ENCODE measurements at regions of chr10 and their contacts with region 1.

Region 1: GRCh38 chr10:23994479-23995046 is 214.4 kb upstream of the KIAA1217 start:
- DNase-seq: no peak
- H3K4me3 ChIP-seq: no peak overlapping the region
- H3K27me3 ChIP-seq: no peaks in the 10 kb centered on the region; the same call in 1 of the 2 replicates
- CTCF ChIP-seq: peak; percentile 85

Region 2: GRCh38 chr10:23432166-23432565 is 562.4 kb before region 1 on chr10:
- CTCF ChIA-PET with region 1: no interaction called
- POLR2A ChIA-PET with region 1: no interaction called
- DNase-seq: no peak
- H3K4me3 ChIP-seq: no peak overlapping the region
- H3K27me3 ChIP-seq: 0 out of 2 replicates have a peak, but pooled peaks cover 2% of the 10 kb centered on the region
- CTCF ChIP-seq: no peak

Region 3: GRCh38 chr10:23981520-23982309 is 12.8 kb before region 1 on chr10:
- CTCF ChIA-PET with region 1: interaction called, 15 read pairs
- POLR2A ChIA-PET with region 1: no interaction called
- DNase-seq: no peak
- H3K4me3 ChIP-seq: no peak overlapping the region
- H3K27me3 ChIP-seq: no peaks in the 10 kb centered on the region
- CTCF ChIP-seq: no peak

Region 4: DNA sequence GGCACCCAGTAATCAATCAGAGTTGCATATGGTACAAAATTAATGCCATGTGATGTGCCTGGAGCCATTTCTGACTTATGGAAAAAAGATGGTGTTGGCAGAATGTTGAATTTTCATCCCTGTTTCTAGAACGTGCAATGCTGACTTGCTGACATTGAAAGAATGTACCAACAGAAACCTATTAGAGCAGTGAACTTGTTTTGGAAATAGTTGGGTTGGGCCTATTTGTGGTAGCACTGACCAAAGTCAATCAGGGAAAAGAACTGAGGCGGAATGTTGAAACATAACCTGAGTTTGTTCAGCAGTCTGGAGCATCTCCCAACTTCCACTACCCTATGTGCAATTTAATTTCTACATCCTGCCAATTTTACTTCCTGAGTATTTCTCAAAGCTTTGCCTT is 202.7 kb after region 1 on chr10:
- CTCF ChIA-PET with region 1: interaction called, 14 read pairs
- POLR2A ChIA-PET with region 1: no interaction called
- DNase-seq: no peak
- H3K4me3 ChIP-seq: no peak overlapping the region
- H3K27me3 ChIP-seq: no peaks in the 10 kb centered on the region
- CTCF ChIP-seq: no peak

Region 5: DNA sequence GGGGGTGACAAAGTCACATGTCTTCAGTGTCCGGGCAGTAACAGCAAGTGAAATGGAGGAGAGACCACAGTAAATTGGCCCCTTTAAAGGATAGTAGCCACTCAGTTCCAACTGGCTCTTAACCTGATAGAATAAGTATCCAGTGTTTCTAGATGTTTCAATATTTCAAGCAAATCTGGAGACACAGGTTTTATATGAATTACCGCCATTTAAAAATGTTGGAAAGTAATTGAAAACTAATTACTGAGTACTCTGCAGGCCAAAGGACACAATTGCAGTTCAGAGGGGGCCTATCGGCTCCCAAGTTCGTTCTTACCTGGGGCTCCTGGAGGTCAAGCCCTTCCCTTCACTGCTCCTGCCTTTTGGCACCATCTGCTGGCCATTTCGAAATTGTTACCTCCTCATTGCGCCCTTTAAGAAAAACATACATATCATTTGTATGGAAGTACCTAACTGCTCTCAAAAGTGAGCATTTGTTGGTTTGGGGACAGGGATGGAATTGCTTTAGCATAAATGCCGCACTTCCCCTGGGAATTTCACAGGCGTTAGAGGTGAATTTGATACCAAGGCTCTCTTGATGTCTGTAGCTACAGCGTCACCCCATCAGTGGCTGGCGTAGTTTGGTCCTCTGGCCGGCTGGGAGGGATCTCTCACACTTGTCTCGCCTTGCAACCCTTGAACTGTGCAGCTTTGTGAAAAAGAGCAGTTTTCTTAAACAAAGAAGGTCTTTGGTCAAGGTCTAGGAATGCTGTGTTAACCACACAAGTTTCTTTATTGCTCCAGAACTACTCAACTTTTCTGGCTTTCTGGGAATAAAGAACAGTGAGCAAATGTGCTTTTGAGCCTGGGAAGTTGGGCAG is 509.1 kb after region 1 on chr10:
- CTCF ChIA-PET with region 1: interaction called, 10 read pairs
- POLR2A ChIA-PET with region 1: no interaction called
- DNase-seq: no peak
- H3K4me3 ChIP-seq: no peak overlapping the region
- H3K27me3 ChIP-seq: no peaks in the 10 kb centered on the region; the same call in 1 of the 2 replicates
- CTCF ChIP-seq: peak; percentile 67

Region 6: GRCh38 chr10:24518981-24519597 is 524.5 kb after region 1 on chr10:
- CTCF ChIA-PET with region 1: interaction called, 82 read pairs
- POLR2A ChIA-PET with region 1: no interaction called
- DNase-seq: no peak
- H3K4me3 ChIP-seq: no peak overlapping the region
- H3K27me3 ChIP-seq: no peaks in the 10 kb centered on the region
- CTCF ChIP-seq: peak; percentile 80